ENCODE measurements at regions of chr11 and their contacts with region 1.

Region 1: GRCh38 chr11:93407777-93408401 is 77.3 kb downstream of the DEUP1 start:
- DNase-seq: no peak
- ATAC-seq: no peak

Region 2: DNA sequence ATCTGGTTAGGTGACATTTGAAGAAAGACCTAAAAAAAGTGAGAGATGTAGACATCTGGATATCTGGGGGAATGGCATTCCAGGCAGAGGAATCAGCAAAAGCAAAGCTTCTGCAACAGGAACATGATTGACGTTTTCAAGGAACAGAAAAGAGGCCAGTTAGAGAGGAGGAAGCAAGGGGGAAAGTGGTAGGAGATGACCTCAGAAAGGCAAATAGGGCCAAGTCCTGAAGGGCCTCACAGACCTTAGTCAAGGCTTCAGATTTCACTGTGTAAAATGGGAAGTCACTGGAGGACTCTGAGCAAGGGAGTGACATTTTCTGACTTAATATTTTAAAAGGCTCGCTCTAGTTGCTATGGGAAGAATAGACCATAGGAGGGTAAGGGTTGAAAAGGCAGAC is 67.7 kb before region 1 on chr11:
- intact Hi-C with region 1: loop called (anchors 2 kb)
- DNase-seq: no peak
- ATAC-seq: no peak

Region 3: DNA sequence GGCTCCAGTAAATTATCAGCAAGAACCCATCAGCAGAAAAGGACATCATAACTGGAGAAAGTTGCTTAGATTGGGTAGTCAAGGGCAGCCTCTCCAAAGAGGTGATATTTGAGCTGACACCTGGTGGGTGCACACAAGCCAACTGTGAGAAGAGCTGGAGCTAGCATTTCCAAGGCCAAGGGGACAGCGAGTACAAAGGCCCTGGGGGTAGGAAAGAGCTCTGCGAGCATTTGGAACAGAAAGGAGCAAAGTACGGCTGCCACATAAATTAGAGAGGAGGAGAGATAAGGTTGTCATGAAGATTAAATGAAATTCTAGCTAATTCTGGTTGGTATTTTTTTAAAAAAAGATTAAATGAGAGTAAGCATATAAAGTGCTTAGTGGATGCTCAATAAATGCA is 157.0 kb after region 1 on chr11:
- intact Hi-C with region 1: no loop called
- DNase-seq: no peak
- ATAC-seq: no peak

Measured in sciatic nerve (tissue), 2 donors.